ENCODE measurements at regions of chr17 and their contacts with region 1.

Region 1: DNA sequence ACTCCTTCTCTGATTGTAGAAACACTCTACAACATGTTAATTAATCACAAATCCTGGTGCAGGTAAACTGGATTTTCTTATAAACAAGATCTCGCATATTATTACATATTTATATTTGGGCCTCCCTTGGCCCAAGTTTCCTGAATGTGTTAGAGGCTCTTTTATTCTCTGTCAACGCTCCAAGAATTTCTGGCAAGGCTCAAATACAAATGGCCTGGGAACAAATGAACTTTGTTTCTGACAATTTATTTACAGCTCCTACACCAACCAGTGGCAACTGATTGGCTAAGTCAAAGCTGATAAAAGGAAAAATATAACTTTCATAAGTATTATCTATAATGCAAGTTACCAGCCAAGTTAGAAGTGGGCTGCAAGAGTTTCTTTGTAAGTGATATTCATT is 64.9 kb upstream of the CORO6 start:
- DNase-seq: no peak
- H3K4me3 Mint-ChIP-seq: no peak overlapping the region
- H3K27ac Mint-ChIP-seq: no peak overlapping the region
- H3K4me1 Mint-ChIP-seq: peaks cover 34% of the 10 kb centered on the region
- H3K27me3 Mint-ChIP-seq: no peaks in the 10 kb centered on the region

Region 2: GRCh38 chr17:29622337-29623282 is 65.0 kb before region 1 on chr17 and contains the start of gene CORO6:
- CTCF ChIA-PET with region 1: interaction called, 5 read pairs
- intact Hi-C with region 1: loop called (anchors 1 kb)
- DNase-seq: peak; percentile 75
- H3K4me3 Mint-ChIP-seq: peak within 1 kb of the TSS; percentile 79
- H3K27ac Mint-ChIP-seq: peak within 1 kb of the TSS; percentile 96
- H3K4me1 Mint-ChIP-seq: peaks cover 57% of the 10 kb centered on the region
- H3K27me3 Mint-ChIP-seq: no peaks in the 10 kb centered on the region
- total RNA-seq, gene CORO6: 24.8 to 27.3 TPM

Region 3: DNA sequence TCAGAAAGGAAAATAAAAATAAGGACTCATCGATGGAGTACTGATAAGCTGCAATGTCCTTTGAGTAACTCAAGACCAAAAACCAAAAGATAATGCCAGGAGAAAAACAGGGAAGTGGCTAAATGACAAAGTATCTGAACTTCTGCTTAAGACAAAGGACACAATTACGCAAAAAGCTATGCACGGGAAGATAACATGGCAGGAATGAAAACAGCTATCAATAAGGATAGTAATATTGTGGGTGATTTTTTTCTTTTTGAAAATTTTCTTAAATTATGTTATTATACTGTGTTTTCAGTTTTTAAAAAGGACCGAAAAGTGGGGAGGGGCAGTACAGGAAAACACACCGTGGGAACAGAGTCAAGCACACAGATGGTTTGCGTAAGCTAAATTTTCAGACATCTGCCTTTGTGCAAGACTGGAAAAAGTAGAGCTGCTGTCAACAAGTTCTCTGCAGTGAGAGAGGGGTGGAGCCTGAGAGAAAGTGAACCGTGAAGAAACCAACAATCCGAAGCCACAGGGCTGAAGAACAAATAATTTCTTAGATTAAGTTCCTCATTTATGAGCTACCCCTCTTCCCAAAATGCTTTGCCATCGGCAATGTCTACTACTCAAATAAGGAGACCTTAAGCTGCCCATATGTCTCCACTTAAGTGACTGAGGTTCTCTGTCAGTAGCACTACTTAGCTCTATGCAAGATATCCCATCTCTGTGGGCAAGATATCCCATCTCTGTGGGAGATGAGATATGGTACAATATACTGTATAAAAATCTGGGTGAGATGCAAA is 35.0 kb after region 1 on chr17:
- CTCF ChIA-PET with region 1: no interaction called
- intact Hi-C with region 1: loop called (anchors 1 kb)
- DNase-seq: peak; percentile 58
- H3K4me3 Mint-ChIP-seq: peak overlapping the region; percentile 55
- H3K27ac Mint-ChIP-seq: peak overlapping the region; percentile 80
- H3K4me1 Mint-ChIP-seq: peaks cover 83% of the 10 kb centered on the region
- H3K27me3 Mint-ChIP-seq: no peaks in the 10 kb centered on the region

Region 4: GRCh38 chr17:29855686-29856085 is 168.1 kb after region 1 on chr17:
- CTCF ChIA-PET with region 1: no interaction called
- intact Hi-C with region 1: no loop called
- DNase-seq: no peak
- H3K4me3 Mint-ChIP-seq: no peak overlapping the region
- H3K27ac Mint-ChIP-seq: no peak overlapping the region
- H3K4me1 Mint-ChIP-seq: peaks cover 5% of the 10 kb centered on the region
- H3K27me3 Mint-ChIP-seq: no peaks in the 10 kb centered on the region